Vagina (tissue), 2 donors: ENCODE measurements at regions of chr2 and their contacts with region 1.

Region 1: DNA sequence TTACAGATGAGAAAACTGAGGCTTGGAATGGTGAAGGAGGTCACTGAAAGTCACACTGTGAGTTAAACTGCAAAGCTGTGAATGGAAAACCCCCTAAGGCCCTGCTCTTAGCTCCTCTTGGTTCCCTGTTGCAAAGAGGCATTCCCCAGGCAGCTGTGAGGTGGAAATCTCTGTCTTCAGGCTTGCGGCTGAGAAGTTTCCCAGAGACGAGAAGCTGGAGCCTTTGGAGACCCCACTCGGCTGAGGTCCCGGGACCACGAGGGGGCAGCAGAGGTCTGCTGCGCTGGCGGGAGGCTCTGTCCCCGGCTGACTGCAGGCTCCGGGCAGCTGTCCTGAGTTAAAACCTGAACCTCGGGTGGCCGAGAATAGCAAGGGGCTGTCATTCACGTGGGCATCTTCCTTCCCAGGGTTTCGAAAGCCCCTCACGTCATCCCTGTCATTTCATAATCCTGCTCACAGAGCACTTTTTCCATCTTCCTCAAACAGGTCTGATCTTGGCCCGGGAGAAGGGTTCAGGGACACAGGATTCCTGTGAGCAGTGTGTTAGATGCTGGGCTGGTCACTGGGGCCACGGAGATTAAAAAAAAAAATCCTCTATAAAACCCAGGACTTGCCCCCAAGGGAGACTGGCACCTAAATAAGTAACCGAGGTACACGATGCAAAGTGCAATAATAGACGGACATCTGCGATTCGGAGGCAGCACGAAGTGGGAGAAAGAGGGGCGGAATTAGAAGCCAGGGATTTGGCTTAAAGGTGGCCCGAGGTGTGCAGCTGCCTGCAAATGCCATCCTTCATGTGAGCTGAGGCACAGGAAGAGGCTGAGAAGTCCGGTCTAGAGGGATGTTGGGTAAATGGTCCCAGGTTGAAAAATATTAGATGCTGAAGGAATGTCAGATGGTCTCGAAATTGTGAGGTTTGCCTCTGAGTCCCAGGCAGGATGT is 24.6 kb upstream of the ATOH8 start:
- DNase-seq: no peak
- H3K4me3 ChIP-seq: no peak overlapping the region
- H3K27ac ChIP-seq: peak overlapping the region; percentile 16
- H3K4me1 ChIP-seq: peaks cover 28% of the 10 kb centered on the region
- H3K27me3 ChIP-seq: no peaks in the 10 kb centered on the region
- CTCF ChIP-seq: peak; percentile 77 to 97 (median 95)
- POLR2A ChIP-seq: no peak

Region 2: DNA sequence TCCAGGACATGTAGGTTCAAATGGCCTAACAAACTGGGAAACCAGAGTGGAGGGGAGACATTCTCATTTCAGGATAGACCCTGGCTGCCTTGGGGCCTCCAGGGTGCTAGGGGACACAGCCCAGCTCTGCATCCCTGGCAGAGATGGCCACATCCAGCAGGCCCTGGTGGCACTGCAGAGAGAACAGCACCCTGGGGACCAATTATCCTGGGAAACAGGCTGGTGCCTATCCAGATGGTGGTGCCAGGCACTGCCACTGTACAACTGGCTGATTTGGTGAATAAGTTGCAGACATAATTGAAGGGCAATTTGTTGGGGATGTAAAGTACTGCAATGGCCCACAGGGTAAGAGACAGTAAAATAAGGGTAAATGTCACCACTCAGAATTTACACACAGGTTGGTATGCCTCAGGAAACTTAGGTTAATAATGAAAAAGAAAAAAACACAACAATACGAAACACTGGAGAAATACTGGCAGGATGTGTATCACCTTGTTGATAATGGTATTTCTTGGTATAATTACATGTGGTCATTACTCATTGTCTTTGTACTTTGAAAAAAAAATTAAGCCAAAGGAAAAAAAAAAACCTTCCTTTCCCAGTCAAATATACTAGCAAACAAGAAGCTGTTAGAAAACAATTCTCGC is 48.3 kb before region 1 on chr2:
- intact Hi-C with region 1: loop called (anchors 1 kb)
- DNase-seq: no peak
- H3K4me3 ChIP-seq: no peak overlapping the region
- H3K27ac ChIP-seq: no peak overlapping the region
- H3K4me1 ChIP-seq: peaks cover 12% of the 10 kb centered on the region
- H3K27me3 ChIP-seq: no peaks in the 10 kb centered on the region
- CTCF ChIP-seq: no peak
- POLR2A ChIP-seq: no peak

Region 3: DNA sequence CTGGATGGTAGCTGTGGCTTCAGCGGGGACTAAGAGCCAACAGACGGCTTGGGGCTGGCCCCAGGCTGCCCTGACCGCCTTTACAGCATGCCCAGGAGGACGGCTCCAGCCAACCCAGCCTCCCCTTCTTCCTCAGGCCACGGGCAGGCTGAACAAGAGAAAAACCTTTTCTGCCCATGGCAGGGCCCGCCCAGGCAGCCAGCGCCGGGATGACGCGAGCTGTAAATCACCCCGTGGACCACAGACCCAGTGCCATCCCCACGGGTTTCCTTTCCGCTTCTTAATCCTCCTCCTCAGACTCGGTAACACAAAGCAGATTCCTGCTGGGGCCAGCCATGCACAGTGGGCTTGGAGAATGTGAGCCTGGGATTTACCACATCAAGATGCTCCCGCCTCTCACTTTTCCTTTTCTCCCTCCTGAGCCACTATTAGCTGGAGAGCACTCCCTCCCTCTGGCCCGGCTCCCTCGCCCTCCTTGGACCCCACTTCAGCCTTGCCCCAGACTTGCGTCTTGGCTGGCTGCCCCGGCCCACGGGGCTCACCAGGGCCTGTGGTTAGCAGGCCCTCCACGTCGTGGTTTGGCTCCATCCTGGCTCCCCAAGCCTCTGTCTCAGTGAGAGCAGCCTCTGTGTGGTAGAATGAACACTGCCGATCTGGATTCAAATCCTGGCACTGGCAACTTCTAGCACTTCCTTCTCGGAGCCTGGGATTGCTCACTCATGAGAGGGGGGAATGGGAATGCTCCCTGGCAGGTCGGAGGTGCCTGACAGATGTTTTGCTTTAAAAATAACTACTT is 56.1 kb after region 1 on chr2:
- intact Hi-C with region 1: no loop called
- DNase-seq: no peak
- H3K4me3 ChIP-seq: no peak overlapping the region
- H3K27ac ChIP-seq: peak overlapping the region; percentile 62
- H3K4me1 ChIP-seq: peaks cover 37% of the 10 kb centered on the region
- H3K27me3 ChIP-seq: no peaks in the 10 kb centered on the region
- CTCF ChIP-seq: no peak
- POLR2A ChIP-seq: no peak

Region 4: DNA sequence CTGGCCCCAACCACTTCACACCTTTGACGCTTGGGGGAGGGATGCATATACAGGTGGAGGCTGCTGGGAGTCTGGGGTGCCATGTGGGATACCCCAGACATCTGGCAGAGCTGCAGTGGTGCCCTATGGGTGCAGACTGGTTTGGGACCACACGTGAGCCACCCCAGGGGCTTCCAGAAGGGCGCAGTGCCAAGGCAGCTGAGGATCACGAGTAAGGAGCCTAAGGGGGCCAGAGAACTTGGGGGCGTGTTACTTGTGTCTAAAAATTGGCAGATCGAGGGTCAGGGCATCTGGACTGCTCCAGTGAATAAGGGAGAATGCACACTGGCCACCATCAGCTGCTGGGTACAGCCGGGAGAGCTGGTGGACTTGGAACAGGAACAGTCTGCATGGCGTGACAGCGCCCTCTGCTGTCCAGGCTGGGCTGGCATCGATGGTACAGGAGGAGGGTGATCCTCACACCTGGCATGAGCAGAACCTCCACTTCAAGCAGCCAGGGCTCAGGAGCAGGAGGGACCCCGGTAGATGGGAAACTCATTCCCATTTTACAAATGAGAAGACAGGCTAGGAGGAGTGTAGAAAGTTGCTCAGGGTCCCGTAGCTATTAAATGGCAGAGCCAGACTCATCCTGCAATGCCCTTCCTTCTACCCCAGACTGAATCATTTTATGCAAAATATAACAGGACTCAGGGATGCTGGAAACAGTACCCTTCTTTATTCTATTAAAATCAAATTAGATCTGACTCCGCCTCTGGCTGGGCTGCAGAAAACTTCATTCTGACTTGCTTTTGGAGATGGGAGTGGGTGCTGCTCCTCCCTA is 85.0 kb after region 1 on chr2:
- intact Hi-C with region 1: loop called (anchors 2 kb)
- DNase-seq: no peak
- H3K4me3 ChIP-seq: no peak overlapping the region
- H3K27ac ChIP-seq: no peak overlapping the region
- H3K4me1 ChIP-seq: peaks cover 23% of the 10 kb centered on the region
- H3K27me3 ChIP-seq: no peaks in the 10 kb centered on the region
- CTCF ChIP-seq: peak; percentile 86 to 98 (median 87)
- POLR2A ChIP-seq: no peak

Region 5: DNA sequence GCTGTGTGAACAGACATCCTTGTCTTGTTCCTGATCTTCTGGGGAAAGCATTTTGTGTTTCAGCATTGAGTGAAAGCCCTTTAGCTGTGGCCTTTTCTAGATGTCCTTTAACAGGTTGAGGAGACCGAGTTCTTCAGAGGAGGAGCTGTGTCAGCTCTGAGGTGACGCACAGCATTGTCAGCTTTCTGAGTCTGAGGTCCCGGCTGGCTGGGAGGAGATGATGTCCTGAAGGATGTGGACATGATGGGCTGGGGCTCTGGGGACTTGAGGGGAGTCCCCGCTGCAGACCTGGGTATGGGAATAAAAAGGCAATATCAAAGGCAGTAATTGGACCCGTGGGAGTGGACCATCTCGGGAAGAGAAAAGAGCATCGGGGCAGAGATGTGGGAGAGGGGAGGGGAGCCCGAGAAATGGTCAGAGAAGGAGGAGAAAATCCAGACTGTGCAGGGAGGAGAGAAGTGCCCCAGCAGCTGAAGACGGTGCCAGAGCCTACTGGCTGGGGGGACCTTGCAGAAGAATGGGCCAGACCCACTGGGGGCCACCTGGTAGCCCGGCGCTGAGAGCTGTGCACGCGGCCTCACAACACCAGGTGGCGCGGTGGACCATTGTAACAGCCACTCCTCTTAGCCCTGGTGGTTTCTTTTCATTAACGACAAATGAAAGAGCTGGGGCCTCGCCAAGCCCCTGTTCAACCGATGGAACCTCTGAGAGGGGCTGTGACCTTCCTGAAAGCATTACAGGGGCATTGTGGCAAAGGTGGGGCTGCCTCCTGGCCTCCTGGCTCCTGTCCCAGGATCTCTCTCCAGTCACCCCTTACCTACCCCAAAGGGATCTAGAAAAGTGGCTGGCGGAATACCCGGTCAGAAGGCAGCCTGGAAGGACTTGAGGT is 98.1 kb after region 1 on chr2:
- intact Hi-C with region 1: no loop called
- DNase-seq: no peak
- H3K4me3 ChIP-seq: peak overlapping the region; percentile 15 to 37
- H3K27ac ChIP-seq: peak overlapping the region; percentile 44
- H3K4me1 ChIP-seq: peaks cover 11% of the 10 kb centered on the region
- H3K27me3 ChIP-seq: no peaks in the 10 kb centered on the region
- CTCF ChIP-seq: peak; percentile 84 to 96 (median 95)
- POLR2A ChIP-seq: no peak

Region 6: GRCh38 chr2:85905187-85905666 is 176.1 kb after region 1 on chr2:
- intact Hi-C with region 1: no loop called
- DNase-seq: no peak
- H3K4me3 ChIP-seq: no peak overlapping the region
- H3K27ac ChIP-seq: peak overlapping the region; percentile 25
- H3K4me1 ChIP-seq: peaks cover 5% of the 10 kb centered on the region
- H3K27me3 ChIP-seq: no peaks in the 10 kb centered on the region
- CTCF ChIP-seq: no peak
- POLR2A ChIP-seq: no peak